ENCODE measurements at regions of chr1 and their contacts with region 1.

Region 1: GRCh38 chr1:117664314-117664713 is 58.5 kb downstream of the TENT5C start:
- DNase-seq: peak; percentile 84
- ATAC-seq: peak; percentile 90
- H3K4me3 Mint-ChIP-seq: no peak overlapping the region
- H3K27ac Mint-ChIP-seq: peak overlapping the region; percentile 77
- H3K4me1 Mint-ChIP-seq: peaks cover 64% of the 10 kb centered on the region
- H3K27me3 Mint-ChIP-seq: peaks cover 17% of the 10 kb centered on the region
- CTCF ChIP-seq: no peak

Region 2: GRCh38 chr1:117001254-117001927 is 662.9 kb before region 1 on chr1 and contains the start of gene CD101:
- CTCF ChIA-PET with region 1: no interaction called
- POLR2A ChIA-PET with region 1: no interaction called
- intact Hi-C with region 1: loop called (anchors 10 kb)
- DNase-seq: peak; percentile 64
- ATAC-seq: peak; percentile 91
- H3K4me3 Mint-ChIP-seq: peak within 1 kb of the TSS; percentile 52
- H3K27ac Mint-ChIP-seq: peak within 1 kb of the TSS; percentile 89
- H3K4me1 Mint-ChIP-seq: peaks cover 59% of the 10 kb centered on the region
- H3K27me3 Mint-ChIP-seq: no peaks in the 10 kb centered on the region
- CTCF ChIP-seq: no peak
- total RNA-seq, gene CD101: 2.5 to 3.2 TPM

Region 3: DNA sequence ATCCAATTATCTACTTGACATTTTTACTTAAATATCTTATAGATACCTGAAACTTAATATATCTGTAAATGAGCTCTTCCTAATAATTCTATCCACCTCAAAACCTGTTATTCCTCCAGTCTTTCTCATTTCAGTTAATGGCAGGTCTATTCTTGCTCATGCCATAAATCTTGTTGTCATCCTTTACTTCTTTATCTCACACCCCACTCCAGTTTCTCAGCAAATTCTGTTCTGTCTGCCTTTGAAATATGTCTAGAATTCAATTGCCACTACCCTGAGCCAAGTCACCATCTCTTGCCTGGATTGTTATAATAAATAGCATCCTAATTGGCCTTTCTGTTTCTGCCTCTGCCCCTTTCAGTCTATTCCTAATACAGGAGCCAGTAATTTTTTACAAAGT is 191.3 kb before region 1 on chr1:
- CTCF ChIA-PET with region 1: no interaction called
- POLR2A ChIA-PET with region 1: no interaction called
- intact Hi-C with region 1: no loop called
- DNase-seq: no peak
- ATAC-seq: no peak
- H3K4me3 Mint-ChIP-seq: no peak overlapping the region
- H3K27ac Mint-ChIP-seq: no peak overlapping the region
- H3K4me1 Mint-ChIP-seq: no peaks in the 10 kb centered on the region
- H3K27me3 Mint-ChIP-seq: no peaks in the 10 kb centered on the region
- CTCF ChIP-seq: no peak